SK-N-SH (cell line): ENCODE measurements at regions of chr1 and their contacts with region 1.

Region 1: DNA sequence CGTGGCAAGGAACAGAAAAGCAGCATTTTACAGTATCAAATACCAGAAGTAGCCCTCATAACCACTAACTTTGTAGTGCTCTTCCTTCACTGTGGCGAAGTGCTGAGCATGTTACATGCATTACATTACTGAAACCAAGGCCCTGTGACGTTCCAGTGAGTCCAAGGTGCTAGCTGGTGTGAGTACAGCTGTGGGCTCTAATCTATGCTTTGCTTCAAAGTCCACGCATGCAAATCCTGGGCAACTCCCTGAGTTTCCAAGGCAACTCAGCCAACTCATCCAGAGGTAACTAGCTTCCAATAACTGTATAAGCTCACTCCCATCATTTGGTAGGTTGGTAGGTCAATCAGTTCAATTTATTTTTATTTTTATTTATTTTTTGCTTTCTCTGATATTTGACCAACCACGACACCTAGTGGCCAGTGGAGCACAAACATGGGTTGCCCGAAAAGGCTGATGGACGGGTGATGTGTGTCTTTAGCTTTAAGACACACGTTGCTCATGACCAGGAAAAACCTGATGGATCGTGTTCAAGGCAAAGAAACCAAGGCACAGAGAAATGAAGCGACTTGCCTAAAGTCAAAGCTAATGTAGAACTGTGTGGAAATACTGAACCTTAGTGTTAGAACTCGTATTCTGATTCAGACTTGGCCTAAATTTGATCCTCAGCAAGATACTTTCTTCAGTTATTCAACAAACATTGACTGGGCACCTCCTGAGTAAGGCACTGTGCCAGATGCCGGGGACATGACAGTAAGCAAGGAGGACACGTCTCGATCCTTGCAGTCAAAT is 73.0 kb downstream of the GNG12 start:
- DNase-seq: peak; percentile 56
- H3K4me3 ChIP-seq: peak overlapping the region in 1 of 2 experiments; percentile 4; a peak in 1 of 4 replicates
- H3K27ac ChIP-seq: peak overlapping the region; percentile 51 to 74; a peak in 3 of 4 replicates
- H3K4me1 ChIP-seq: peaks cover 5 to 10% of the 10 kb centered on the region in 2 experiments; a peak in 3 of 4 replicates
- H3K27me3 ChIP-seq: no peaks in the 10 kb centered on the region
- CTCF ChIP-seq: peak; percentile 94
- EP300 ChIP-seq: no peak
- RAD21 ChIP-seq: peak; percentile 87

Region 2: GRCh38 chr1:67535474-67535873 is 224.8 kb before region 1 on chr1:
- CTCF ChIA-PET with region 1: interaction called, 284 read pairs
- POLR2A ChIA-PET with region 1: no interaction called
- DNase-seq: peak; percentile 69
- H3K4me3 ChIP-seq: no peak overlapping the region
- H3K27ac ChIP-seq: no peak overlapping the region
- H3K4me1 ChIP-seq: no peaks in the 10 kb centered on the region; a peak in 1 of 4 replicates
- H3K27me3 ChIP-seq: no peaks in the 10 kb centered on the region
- CTCF ChIP-seq: peak; percentile 99
- EP300 ChIP-seq: no peak
- RAD21 ChIP-seq: peak; percentile 87

Region 3: DNA sequence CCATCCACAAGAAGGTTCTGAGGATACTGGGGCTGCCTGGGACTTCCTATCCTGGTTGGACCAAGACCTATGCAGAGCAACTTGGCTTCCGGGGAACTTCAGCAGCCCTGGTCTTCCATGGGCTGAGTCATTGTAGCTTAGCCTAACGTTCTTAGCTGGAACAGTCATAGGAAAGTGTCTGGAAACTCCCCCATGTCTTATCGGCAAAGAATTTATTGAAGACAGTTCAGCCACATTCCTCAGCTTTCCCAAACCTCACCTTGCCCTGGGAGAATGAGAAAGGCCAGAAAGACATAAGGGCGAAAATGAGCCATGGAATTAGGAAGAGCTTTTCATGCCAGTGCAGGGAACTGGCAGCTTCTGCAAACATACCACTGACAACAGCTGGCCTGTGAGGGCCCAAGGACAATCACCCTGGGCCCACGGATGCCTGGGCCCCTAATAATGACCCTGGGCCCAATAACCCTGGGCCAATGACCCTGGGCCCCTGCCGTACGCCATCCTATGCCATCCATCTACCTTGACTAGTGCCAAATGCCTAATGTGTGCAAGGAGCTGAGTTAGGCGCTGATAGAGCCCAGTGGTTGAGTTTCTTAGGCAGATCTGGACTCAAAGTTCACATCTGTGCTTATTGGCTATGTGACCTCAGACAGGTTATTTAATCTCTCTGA is 189.6 kb before region 1 on chr1:
- CTCF ChIA-PET with region 1: interaction called, 49 read pairs
- POLR2A ChIA-PET with region 1: no interaction called
- DNase-seq: no peak
- H3K4me3 ChIP-seq: no peak overlapping the region
- H3K27ac ChIP-seq: peak overlapping the region; percentile 19 to 75; a peak in 2 of 4 replicates
- H3K4me1 ChIP-seq: peaks cover 12 to 14% of the 10 kb centered on the region in 2 experiments; a peak in 3 of 4 replicates
- H3K27me3 ChIP-seq: no peaks in the 10 kb centered on the region
- CTCF ChIP-seq: no peak
- EP300 ChIP-seq: peak in 1 of 2 experiments; percentile 78; a peak in 1 of 4 replicates
- RAD21 ChIP-seq: no peak

Region 4: DNA sequence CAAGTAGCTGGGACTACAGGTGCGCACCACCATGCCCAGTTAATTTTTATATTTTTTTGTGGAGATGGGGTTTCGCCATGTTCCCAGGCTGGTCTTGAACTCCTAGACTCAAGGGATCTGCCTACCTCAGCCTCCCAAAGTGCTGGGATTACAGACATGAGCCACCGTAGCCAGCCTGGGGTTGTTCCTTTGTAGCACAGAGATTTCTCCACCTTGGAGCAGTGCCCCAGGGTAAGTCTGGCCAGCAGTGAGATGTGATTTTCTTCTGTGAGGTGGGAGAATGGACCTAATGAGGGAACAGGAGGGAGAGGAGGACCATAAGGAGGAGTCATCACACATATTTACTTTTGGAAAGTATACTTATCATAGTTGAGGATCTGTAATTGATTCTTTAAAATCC is 136.3 kb before region 1 on chr1:
- CTCF ChIA-PET with region 1: no interaction called
- POLR2A ChIA-PET with region 1: no interaction called
- DNase-seq: no peak
- H3K4me3 ChIP-seq: no peak overlapping the region
- H3K27ac ChIP-seq: no peak overlapping the region
- H3K4me1 ChIP-seq: peaks cover 0 to 3% of the 10 kb centered on the region in 2 experiments; a peak in 1 of 4 replicates
- H3K27me3 ChIP-seq: no peaks in the 10 kb centered on the region
- CTCF ChIP-seq: no peak
- EP300 ChIP-seq: no peak
- RAD21 ChIP-seq: no peak

Region 5: DNA sequence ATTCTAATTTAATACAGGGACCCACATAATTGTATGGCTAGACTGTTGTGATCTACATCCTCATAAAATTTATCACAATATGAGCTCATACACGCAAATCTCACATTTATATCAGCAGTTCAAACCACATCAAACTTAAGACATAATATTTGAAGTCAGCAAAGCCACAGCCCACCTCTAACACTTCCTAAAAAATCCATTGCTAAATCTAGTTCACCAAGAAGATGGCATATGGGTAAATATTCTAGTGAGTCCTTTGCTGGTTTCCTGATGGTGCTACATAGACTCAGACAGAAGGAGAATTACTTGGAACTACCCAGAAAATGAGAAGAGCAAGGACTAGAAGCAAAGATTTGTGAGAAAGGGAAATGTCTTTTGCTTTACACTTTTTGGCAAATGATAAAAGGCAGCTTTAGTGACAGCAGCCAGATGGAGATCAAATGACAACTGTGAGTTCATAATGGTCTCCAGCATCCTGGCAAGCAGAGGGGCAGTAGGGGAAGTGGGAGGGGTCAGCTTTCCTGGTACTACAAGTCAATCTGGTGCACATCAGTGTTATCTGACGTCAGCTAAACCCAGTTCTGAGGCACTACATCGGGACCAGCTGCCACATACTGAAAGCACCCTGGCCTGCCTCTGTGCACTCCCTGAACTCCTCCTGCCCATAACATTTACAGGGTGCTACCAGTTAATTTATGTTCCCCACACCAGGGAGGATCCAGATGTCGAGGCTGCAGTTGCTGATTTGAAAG is 85.8 kb before region 1 on chr1:
- CTCF ChIA-PET with region 1: interaction called, 10 read pairs
- POLR2A ChIA-PET with region 1: no interaction called
- DNase-seq: peak; percentile 75
- H3K4me3 ChIP-seq: no peak overlapping the region; a peak in 1 of 4 replicates
- H3K27ac ChIP-seq: peak overlapping the region; percentile 38 to 81; a peak in 3 of 4 replicates
- H3K4me1 ChIP-seq: peaks cover 13 to 16% of the 10 kb centered on the region in 2 experiments; a peak in 3 of 4 replicates
- H3K27me3 ChIP-seq: no peaks in the 10 kb centered on the region
- CTCF ChIP-seq: no peak
- EP300 ChIP-seq: peak; percentile 9 to 73; a peak in 2 of 4 replicates
- RAD21 ChIP-seq: no peak

Region 6: GRCh38 chr1:67723620-67724019 is 36.6 kb before region 1 on chr1:
- CTCF ChIA-PET with region 1: interaction called, 19 read pairs
- POLR2A ChIA-PET with region 1: no interaction called
- DNase-seq: no peak
- H3K4me3 ChIP-seq: no peak overlapping the region
- H3K27ac ChIP-seq: peak overlapping the region; percentile 83 to 95; a peak in 3 of 4 replicates
- H3K4me1 ChIP-seq: peaks cover 39 to 44% of the 10 kb centered on the region in 2 experiments
- H3K27me3 ChIP-seq: no peaks in the 10 kb centered on the region
- CTCF ChIP-seq: no peak
- EP300 ChIP-seq: peak in 1 of 2 experiments; percentile 39; a peak in 1 of 4 replicates
- RAD21 ChIP-seq: no peak

Region 7: DNA sequence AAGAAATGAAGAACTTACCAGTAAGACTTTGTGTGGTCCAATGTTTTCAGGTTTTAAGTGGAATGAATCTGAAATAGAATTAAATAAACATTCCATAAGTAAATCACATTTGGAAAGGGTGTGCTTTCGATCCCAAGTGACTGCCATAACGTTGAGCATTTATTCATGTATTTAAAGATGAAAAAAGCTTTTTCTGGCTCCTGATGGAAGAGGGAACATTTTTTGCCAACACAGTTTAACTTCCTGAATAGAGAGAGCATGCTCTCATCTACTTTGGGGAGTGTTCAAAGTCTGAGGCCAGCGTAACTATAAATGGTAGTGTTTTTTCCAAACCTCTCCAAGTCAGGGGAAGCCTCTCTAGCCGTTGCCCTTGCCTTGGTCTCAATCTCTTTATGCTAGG is 17.2 kb after region 1 on chr1:
- CTCF ChIA-PET with region 1: interaction called, 30 read pairs
- POLR2A ChIA-PET with region 1: no interaction called
- DNase-seq: no peak
- H3K4me3 ChIP-seq: no peak overlapping the region
- H3K27ac ChIP-seq: no peak overlapping the region
- H3K4me1 ChIP-seq: peaks cover 0 to 2% of the 10 kb centered on the region in 2 experiments; a peak in 1 of 4 replicates
- H3K27me3 ChIP-seq: no peaks in the 10 kb centered on the region
- CTCF ChIP-seq: no peak
- EP300 ChIP-seq: no peak
- RAD21 ChIP-seq: no peak

Region 8: GRCh38 chr1:67897270-67897949 is 137.2 kb after region 1 on chr1:
- CTCF ChIA-PET with region 1: no interaction called
- POLR2A ChIA-PET with region 1: no interaction called
- DNase-seq: no peak
- H3K4me3 ChIP-seq: no peak overlapping the region
- H3K27ac ChIP-seq: peak overlapping the region in 1 of 2 experiments; percentile 21; a peak in 1 of 4 replicates
- H3K4me1 ChIP-seq: peaks cover 0 to 13% of the 10 kb centered on the region in 2 experiments; a peak in 2 of 4 replicates
- H3K27me3 ChIP-seq: no peaks in the 10 kb centered on the region
- CTCF ChIP-seq: no peak
- EP300 ChIP-seq: no peak
- RAD21 ChIP-seq: no peak

Region 9: DNA sequence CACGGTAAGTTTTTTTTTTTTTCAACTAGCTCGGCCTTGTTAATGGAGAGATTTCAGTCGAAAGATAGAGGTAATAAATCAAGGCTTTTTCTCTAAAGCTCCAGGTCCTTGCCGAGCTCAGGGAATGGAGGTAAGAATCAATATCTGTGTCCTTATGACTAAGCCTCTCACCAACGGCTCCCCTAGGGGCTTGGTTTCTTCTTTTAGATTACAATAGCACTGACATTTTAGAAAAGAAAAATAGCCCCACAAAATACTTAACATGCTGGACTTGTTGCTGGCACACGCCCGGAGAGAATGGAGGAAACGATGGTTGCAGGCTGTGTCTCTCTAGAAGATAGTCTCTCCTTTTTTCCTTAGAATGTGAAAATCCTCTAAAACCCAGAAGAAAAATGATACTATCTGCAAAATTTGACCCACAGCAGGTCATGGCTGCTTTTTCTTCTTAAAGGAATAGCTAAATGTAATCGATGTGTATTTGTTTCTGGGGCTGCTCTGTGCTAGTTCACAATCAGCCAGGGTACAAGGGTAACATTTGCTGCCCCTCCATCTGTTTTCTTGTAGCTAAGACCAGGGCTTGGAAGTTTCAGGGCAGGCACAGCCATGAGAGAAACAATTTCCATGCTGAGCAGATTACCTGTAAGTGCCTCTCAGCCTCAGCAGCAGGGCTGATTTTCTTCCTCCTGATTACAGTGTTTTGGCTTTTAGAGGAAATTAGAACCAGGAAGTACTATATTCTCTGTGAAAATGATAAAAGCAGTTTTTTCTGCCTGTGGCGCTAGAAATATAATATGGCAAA is 159.2 kb after region 1 on chr1:
- CTCF ChIA-PET with region 1: no interaction called
- POLR2A ChIA-PET with region 1: no interaction called
- DNase-seq: no peak
- H3K4me3 ChIP-seq: no peak overlapping the region
- H3K27ac ChIP-seq: no peak overlapping the region
- H3K4me1 ChIP-seq: peaks cover 0 to 2% of the 10 kb centered on the region in 2 experiments; a peak in 1 of 4 replicates
- H3K27me3 ChIP-seq: no peaks in the 10 kb centered on the region
- CTCF ChIP-seq: no peak
- EP300 ChIP-seq: no peak
- RAD21 ChIP-seq: no peak